ENCODE measurements at regions of chr9 and their contacts with region 1.

Region 1: DNA sequence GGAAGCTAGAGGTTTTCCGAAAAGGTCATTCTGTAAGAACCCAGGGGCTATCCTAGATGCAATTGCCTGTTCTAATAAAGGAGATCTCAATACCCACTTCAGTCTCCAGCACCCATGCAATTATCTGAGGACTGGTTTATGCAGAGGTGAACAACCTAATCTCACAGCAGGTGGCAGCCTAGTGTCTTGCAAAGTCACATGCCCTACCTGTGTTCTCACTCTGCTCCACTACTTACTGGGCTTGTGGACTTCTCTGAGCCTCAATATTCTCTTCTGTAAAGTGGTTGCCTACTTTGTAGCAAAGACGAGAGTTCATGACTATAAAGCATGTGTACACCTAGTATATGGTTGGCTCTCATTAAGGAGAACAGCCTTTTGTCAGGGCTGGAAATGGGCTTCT is 21.0 kb upstream of the ALDH1B1 start:
- DNase-seq: peak in 1 of 2 donors; percentile 61
- H3K4me3 ChIP-seq: no peak overlapping the region
- H3K27ac ChIP-seq: no peak overlapping the region
- H3K4me1 ChIP-seq: peaks cover 0 to 9% (median 4%) of the 10 kb centered on the region in 4 donors
- H3K27me3 ChIP-seq: no peaks in the 10 kb centered on the region
- CTCF ChIP-seq: peak; percentile 47 to 59

Region 2: GRCh38 chr9:38294220-38294960 is 77.1 kb before region 1 on chr9:
- intact Hi-C with region 1: no loop called
- DNase-seq: peak in 1 of 2 donors; percentile 31
- H3K4me3 ChIP-seq: no peak overlapping the region
- H3K27ac ChIP-seq: peak overlapping the region; percentile 32 to 51
- H3K4me1 ChIP-seq: peaks cover 0 to 24% (median 16%) of the 10 kb centered on the region in 4 donors
- H3K27me3 ChIP-seq: no peaks in the 10 kb centered on the region
- CTCF ChIP-seq: no peak

Region 3: GRCh38 chr9:38401994-38402393 is 30.5 kb after region 1 on chr9:
- intact Hi-C with region 1: loop called (anchors 2 kb)
- DNase-seq: no peak
- H3K4me3 ChIP-seq: no peak overlapping the region
- H3K27ac ChIP-seq: no peak overlapping the region
- H3K4me1 ChIP-seq: peaks cover 0 to 33% (median 10%) of the 10 kb centered on the region in 4 donors
- H3K27me3 ChIP-seq: no peaks in the 10 kb centered on the region
- CTCF ChIP-seq: no peak

Region 4: DNA sequence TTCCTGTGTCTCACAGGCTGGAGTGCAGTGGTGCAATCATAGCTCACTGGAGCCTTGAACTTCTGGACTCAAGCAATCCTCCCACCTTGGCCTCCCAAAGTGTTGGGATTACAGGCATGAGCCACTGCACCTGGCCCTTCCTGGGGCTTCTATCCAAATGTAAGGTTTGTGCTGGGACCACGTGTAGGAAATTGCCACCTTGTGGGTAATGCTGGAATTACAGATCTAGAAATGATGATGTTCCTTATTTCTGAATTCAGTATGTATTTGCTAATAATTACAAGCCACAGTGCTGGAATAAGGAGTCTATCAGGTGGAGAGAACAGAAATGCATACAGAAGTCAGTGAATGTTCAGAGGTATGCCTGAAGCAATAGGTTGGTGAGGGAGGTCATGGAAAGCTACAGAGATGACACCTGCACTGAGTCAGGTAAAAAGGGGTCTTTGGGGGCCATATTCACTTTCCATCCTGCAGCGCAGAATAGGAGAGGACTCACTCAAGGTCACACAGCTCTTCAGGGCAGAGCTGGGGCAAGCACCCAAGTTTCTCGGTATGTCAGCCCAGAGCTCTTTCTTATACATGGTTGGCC is 61.5 kb after region 1 on chr9:
- intact Hi-C with region 1: loop called (anchors 5 kb)
- DNase-seq: no peak
- H3K4me3 ChIP-seq: no peak overlapping the region
- H3K27ac ChIP-seq: no peak overlapping the region
- H3K4me1 ChIP-seq: no peaks in the 10 kb centered on the region
- H3K27me3 ChIP-seq: no peaks in the 10 kb centered on the region
- CTCF ChIP-seq: peak; percentile 60 to 69